MCF 10A (cell line): ENCODE measurements at regions of chr1 and their contacts with region 1.

Region 1: GRCh38 chr1:208184088-208184911 is 59.9 kb downstream of the PLXNA2 start:
- DNase-seq: peak; percentile 100
- H3K4me3 Mint-ChIP-seq: peak overlapping the region; percentile 58
- H3K27ac Mint-ChIP-seq: peak overlapping the region; percentile 78
- H3K4me1 Mint-ChIP-seq: peaks cover 61% of the 10 kb centered on the region
- H3K27me3 Mint-ChIP-seq: no peaks in the 10 kb centered on the region
- CTCF ChIP-seq: no peak

Region 2: DNA sequence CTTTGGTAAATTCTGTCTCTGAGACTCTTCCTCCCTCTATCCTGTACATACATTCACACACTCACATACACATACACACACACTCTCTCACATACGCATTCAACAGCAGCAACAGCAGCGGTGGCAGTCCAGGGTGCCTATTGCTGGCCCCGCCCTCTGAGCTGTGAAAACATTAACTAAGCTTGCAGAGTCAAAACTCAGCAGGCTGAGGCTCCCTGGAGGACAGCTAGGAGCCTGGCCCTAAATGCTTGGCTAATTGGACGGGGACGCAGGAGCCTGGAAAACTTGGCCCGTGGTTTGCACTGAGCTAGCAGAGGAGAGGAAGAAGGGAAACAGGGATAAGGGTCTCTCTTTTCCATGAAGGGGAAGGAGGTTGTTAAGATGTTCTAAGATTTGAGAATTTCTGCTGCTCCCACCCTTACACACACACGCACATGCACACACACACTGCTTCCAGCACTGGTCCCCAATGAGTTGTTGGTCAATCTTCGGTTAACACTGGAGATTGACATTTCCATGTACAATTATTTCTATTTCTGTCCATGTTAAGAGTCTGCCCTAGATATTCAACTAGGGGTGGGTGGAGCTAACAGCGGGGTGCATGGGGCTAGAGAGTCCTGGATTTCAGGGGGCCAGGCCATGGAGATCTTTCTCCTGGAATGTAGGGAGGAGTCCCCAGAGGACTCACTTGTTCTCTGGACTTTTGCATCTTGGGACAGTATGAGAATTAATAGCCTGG is 34.4 kb before region 1 on chr1:
- CTCF ChIA-PET with region 1: interaction called, 5 read pairs
- POLR2A ChIA-PET with region 1: interaction called, 10 read pairs
- intact Hi-C with region 1: no loop called
- DNase-seq: no peak
- H3K4me3 Mint-ChIP-seq: no peak overlapping the region
- H3K27ac Mint-ChIP-seq: no peak overlapping the region
- H3K4me1 Mint-ChIP-seq: peaks cover 10% of the 10 kb centered on the region
- H3K27me3 Mint-ChIP-seq: no peaks in the 10 kb centered on the region
- CTCF ChIP-seq: no peak

Region 3: DNA sequence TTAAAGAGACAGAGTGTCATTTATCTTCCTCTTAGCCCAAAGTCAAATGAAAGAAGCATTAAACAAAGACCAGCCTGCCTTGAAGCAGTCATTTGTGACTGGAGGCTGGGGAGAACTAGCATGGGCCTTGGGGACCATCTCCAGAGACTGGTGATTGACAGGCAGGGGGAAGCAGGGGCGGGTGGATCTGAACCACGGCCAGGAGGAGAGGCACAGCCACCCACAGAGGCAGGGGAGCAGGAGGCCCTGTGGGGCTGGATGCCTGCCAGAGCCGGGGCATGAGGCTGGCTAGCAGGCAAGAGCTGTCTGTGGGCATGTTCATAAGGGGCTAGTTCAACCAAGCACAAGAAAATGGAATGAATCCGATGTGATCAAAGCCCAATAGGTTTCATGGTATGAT is 14.0 kb before region 1 on chr1:
- CTCF ChIA-PET with region 1: interaction called, 17 read pairs
- POLR2A ChIA-PET with region 1: interaction called, 24 read pairs
- intact Hi-C with region 1: no loop called
- DNase-seq: peak; percentile 62
- H3K4me3 Mint-ChIP-seq: no peak overlapping the region
- H3K27ac Mint-ChIP-seq: no peak overlapping the region
- H3K4me1 Mint-ChIP-seq: peaks cover 41% of the 10 kb centered on the region
- H3K27me3 Mint-ChIP-seq: no peaks in the 10 kb centered on the region
- CTCF ChIP-seq: no peak

Region 4: GRCh38 chr1:208207388-208208131 is 23.3 kb after region 1 on chr1:
- CTCF ChIA-PET with region 1: interaction called, 41 read pairs
- POLR2A ChIA-PET with region 1: interaction called, 201 read pairs
- intact Hi-C with region 1: loop called (anchors 1 kb)
- DNase-seq: peak; percentile 100
- H3K4me3 Mint-ChIP-seq: peak overlapping the region; percentile 43
- H3K27ac Mint-ChIP-seq: peak overlapping the region; percentile 89
- H3K4me1 Mint-ChIP-seq: peaks cover 30% of the 10 kb centered on the region
- H3K27me3 Mint-ChIP-seq: no peaks in the 10 kb centered on the region
- CTCF ChIP-seq: no peak

Region 5: GRCh38 chr1:208233546-208233945 is 49.2 kb after region 1 on chr1:
- CTCF ChIA-PET with region 1: interaction called, 1,037 read pairs
- POLR2A ChIA-PET with region 1: interaction called, 87 read pairs
- intact Hi-C with region 1: no loop called
- DNase-seq: no peak
- H3K4me3 Mint-ChIP-seq: no peak overlapping the region
- H3K27ac Mint-ChIP-seq: peak overlapping the region; percentile 32
- H3K4me1 Mint-ChIP-seq: peaks cover 71% of the 10 kb centered on the region
- H3K27me3 Mint-ChIP-seq: no peaks in the 10 kb centered on the region
- CTCF ChIP-seq: no peak